Gastrocnemius medialis (tissue), 4 donors: ENCODE measurements at regions of chr1 and their contacts with region 1.

Region 1: DNA sequence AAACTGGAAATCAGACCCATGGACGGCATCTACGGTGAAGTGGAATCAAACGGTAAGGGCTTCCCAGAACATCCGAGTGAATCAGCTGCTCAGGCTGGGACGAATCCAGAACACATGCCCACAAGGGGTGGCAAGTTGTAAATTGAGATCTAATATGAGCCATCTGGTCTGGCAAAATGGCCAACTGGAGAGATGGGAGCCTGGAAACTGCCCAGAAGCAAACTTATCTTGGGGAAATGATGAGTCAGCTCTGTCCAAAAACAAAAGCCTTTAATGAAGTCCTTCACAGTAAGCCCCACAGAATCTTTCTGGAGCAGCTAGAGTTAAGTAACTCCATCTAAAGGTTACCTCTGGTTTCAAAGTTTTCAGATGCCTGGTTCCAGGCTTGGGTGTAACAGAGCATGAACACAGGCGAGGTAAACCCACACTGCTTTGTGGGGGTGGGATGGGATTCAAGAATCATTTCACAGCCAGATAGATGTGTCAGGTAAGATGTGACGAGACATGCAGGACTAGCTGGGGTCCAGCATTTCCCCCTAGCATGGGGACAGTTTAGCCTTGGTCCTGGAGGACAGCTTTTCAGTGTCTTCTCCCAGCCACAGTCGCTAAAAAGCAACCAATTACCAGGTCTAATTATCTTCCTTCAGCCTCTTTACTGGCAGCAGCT is 10.5 kb upstream of the SRP9 start:
- DNase-seq: peak; percentile 65 to 67
- ATAC-seq: peak; percentile 78 to 83
- H3K4me3 ChIP-seq: peak overlapping the region in 2 of 4 donors; percentile 5 to 27
- H3K27ac ChIP-seq: peak overlapping the region; percentile 64 to 84 (median 70)
- H3K4me1 ChIP-seq: peaks cover 38 to 47% of the 10 kb centered on the region in 2 donors
- H3K27me3 ChIP-seq: no peaks in the 10 kb centered on the region
- CTCF ChIP-seq: no peak
- POLR2A ChIP-seq: no peak

Region 2: GRCh38 chr1:225480825-225481434 is 286.2 kb before region 1 on chr1:
- in situ Hi-C with region 1: loop called in 3 of 4 experiments (anchors 5 to 10 kb)
- intact Hi-C with region 1: no loop called
- DNase-seq: peak in 1 of 2 donors; percentile 42
- ATAC-seq: peak; percentile 48 to 71
- H3K4me3 ChIP-seq: no peak overlapping the region
- H3K27ac ChIP-seq: no peak overlapping the region
- H3K4me1 ChIP-seq: peaks cover 0 to 4% of the 10 kb centered on the region in 2 donors
- H3K27me3 ChIP-seq: no peaks in the 10 kb centered on the region
- CTCF ChIP-seq: peak; percentile 57 to 80 (median 63)
- POLR2A ChIP-seq: no peak

Region 3: GRCh38 chr1:225554216-225554812 is 212.8 kb before region 1 on chr1:
- in situ Hi-C with region 1: loop called in 2 of 4 experiments (anchors 5 to 10 kb)
- intact Hi-C with region 1: loop called (anchors 5 kb)
- DNase-seq: no peak
- ATAC-seq: peak in 1 of 2 donors; percentile 44
- H3K4me3 ChIP-seq: no peak overlapping the region
- H3K27ac ChIP-seq: peak overlapping the region in 1 of 4 donors; percentile 1
- H3K4me1 ChIP-seq: peaks cover 9 to 28% of the 10 kb centered on the region in 2 donors
- H3K27me3 ChIP-seq: no peaks in the 10 kb centered on the region
- CTCF ChIP-seq: peak in 4 of 5 experiments; percentile 34 to 52 (median 47)
- POLR2A ChIP-seq: no peak

Region 4: GRCh38 chr1:225748529-225748928 is 18.6 kb before region 1 on chr1:
- in situ Hi-C with region 1: no loop called
- intact Hi-C with region 1: loop called (anchors 2 kb)
- DNase-seq: no peak
- ATAC-seq: no peak
- H3K4me3 ChIP-seq: no peak overlapping the region
- H3K27ac ChIP-seq: no peak overlapping the region
- H3K4me1 ChIP-seq: peaks cover 39 to 42% of the 10 kb centered on the region in 2 donors
- H3K27me3 ChIP-seq: no peaks in the 10 kb centered on the region
- CTCF ChIP-seq: no peak
- POLR2A ChIP-seq: no peak